CD8-positive, alpha-beta memory T cell (primary cell): ENCODE measurements at regions of chr3 and their contacts with region 1.

Region 1: DNA sequence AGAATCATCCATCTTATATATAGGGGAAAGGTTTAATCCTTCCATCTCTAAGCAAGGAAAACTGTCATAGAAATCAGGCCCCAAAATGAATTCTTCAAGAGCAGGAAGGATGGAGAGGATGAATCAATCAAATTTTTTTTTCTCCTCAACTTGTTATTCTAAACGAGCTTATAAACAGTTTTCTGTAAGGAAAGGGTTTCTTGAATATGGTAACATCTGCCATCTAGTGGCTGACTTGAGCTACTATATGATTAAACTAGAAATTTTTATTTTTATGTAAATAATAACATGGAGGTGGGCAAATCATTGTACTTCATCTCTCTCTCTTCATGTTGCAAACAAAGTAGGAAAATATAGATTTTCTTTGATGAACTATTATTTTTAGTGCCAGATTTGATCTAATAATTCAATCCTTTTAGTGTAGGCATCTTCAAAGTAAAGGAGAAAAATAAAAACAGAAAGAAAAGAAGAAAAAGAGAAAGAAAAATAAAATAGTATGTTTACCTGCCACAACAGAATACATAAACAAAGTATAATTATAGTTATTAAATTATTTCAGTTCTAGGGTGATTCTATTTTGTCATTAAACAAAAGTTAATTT is 146.6 kb downstream of the SERPINI1 start:
- DNase-seq: peak in 2 of 5 donors; percentile 9 to 21
- H3K4me3 ChIP-seq: no peak overlapping the region
- H3K4me3 Mint-ChIP-seq: no peak overlapping the region
- H3K27ac ChIP-seq: no peak overlapping the region
- H3K27ac Mint-ChIP-seq: no peak overlapping the region
- H3K4me1 ChIP-seq: no peaks in the 10 kb centered on the region
- H3K4me1 Mint-ChIP-seq: peaks cover 0 to 5% (median 5%) of the 10 kb centered on the region in 3 donors
- H3K27me3 ChIP-seq: no peaks in the 10 kb centered on the region
- H3K27me3 Mint-ChIP-seq: peaks cover 2 to 13% of the 10 kb centered on the region in 2 donors

Region 2: GRCh38 chr3:167380004-167380689 is 502.0 kb before region 1 on chr3 and contains the start of gene ZBBX:
- CTCF ChIA-PET with region 1: interaction called, 12 read pairs
- POLR2A ChIA-PET with region 1: no interaction called
- DNase-seq: peak; percentile 61 to 85 (median 67)
- H3K4me3 ChIP-seq: peak within 1 kb of the TSS; percentile 16
- H3K4me3 Mint-ChIP-seq: peak within 1 kb of the TSS; percentile 14 to 80 (median 70)
- H3K27ac ChIP-seq: no peak within 1 kb of the TSS
- H3K27ac Mint-ChIP-seq: peak within 1 kb of the TSS; percentile 31 to 89 (median 73)
- H3K4me1 ChIP-seq: no peaks in the 10 kb centered on the region
- H3K4me1 Mint-ChIP-seq: peaks cover 3 to 10% (median 7%) of the 10 kb centered on the region in 3 donors
- H3K27me3 ChIP-seq: no peaks in the 10 kb centered on the region
- H3K27me3 Mint-ChIP-seq: no peaks in the 10 kb centered on the region
- total RNA-seq, gene ZBBX: not detected

Region 3: GRCh38 chr3:167843886-167844285 is 38.3 kb before region 1 on chr3:
- CTCF ChIA-PET with region 1: no interaction called
- POLR2A ChIA-PET with region 1: no interaction called
- DNase-seq: no peak
- H3K4me3 ChIP-seq: no peak overlapping the region
- H3K4me3 Mint-ChIP-seq: no peak overlapping the region
- H3K27ac ChIP-seq: no peak overlapping the region
- H3K27ac Mint-ChIP-seq: no peak overlapping the region
- H3K4me1 ChIP-seq: no peaks in the 10 kb centered on the region
- H3K4me1 Mint-ChIP-seq: no peaks in the 10 kb centered on the region
- H3K27me3 ChIP-seq: no peaks in the 10 kb centered on the region
- H3K27me3 Mint-ChIP-seq: peaks cover 0 to 10% of the 10 kb centered on the region in 2 donors

Region 4: GRCh38 chr3:167854063-167854462 is 28.1 kb before region 1 on chr3:
- CTCF ChIA-PET with region 1: no interaction called
- POLR2A ChIA-PET with region 1: no interaction called
- DNase-seq: no peak
- H3K4me3 ChIP-seq: no peak overlapping the region
- H3K4me3 Mint-ChIP-seq: no peak overlapping the region
- H3K27ac ChIP-seq: no peak overlapping the region
- H3K27ac Mint-ChIP-seq: no peak overlapping the region
- H3K4me1 ChIP-seq: no peaks in the 10 kb centered on the region
- H3K4me1 Mint-ChIP-seq: no peaks in the 10 kb centered on the region
- H3K27me3 ChIP-seq: no peaks in the 10 kb centered on the region
- H3K27me3 Mint-ChIP-seq: no peaks in the 10 kb centered on the region